Activated B cell treated with CpG ODN at 0.5 μM for 24 hours (primary cell): ENCODE measurements at regions of chr3 and their contacts with region 1.

Region 1: DNA sequence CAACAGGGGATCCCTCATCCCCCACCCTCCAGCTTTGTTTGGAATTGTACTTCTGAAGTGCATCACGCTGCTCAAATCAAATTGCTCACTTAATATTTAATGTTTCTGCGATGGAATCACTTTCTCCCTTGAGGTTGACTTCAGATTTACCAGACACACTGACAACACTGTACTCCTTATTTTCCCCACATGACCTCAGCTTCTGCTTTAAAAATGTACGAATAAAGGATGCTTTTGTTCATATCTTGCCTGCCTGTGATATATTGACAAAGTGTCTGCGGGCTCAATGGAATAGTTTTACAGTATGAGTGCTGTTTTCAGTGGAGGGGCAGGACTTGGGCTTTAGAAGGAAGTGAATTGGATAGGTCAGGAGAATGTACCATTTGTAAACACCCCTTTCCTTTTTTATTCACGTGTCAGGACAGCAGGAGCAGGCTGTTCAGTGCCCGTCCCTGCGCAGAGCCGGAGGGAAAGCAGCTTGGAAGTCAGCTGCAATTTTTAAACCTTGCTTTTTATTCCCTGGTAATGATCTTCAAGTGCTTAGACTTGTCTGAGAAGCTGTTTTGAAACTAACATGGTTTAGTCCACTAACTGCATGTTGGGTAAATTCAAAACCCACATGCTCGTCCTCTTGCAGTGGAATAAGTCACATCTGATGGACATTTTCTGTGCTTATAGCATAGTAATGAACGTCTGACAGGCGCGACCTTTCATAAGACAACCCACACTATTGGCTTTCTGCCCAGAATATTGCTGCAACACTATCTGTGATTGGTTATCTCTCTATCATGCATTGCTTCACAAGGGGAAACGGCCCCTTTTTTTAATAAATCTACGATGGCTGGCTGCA is 29.9 kb downstream of the MBNL1 start:
- DNase-seq: no peak
- ATAC-seq: peak; percentile 77
- H3K4me3 Mint-ChIP-seq: peak overlapping the region; percentile 58
- H3K27ac Mint-ChIP-seq: peak overlapping the region; percentile 61
- H3K4me1 Mint-ChIP-seq: peaks cover 84% of the 10 kb centered on the region
- H3K27me3 Mint-ChIP-seq: no peaks in the 10 kb centered on the region
- CTCF ChIP-seq: no peak

Region 2: DNA sequence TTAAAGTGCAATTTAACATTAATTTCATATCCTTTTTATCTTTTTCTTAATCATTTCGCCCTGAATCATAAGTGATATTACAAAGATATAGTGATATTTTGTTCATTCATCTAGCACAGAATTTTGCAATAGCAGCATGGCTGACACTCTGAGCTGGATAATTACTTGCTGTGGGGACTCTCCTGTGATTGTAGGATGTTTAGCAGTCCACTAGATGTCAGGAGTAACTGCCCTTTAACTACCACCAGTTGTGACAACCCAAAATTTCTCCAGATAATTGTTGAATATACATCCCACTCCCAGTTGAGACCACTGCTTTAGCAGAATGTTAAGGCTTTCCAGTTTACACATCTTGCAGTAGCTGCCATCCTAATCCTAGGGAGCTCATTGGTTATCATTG is 226.7 kb before region 1 on chr3:
- CTCF ChIA-PET with region 1: no interaction called
- POLR2A ChIA-PET with region 1: no interaction called
- intact Hi-C with region 1: loop called (anchors 10 kb)
- DNase-seq: no peak
- ATAC-seq: peak; percentile 66
- H3K4me3 Mint-ChIP-seq: no peak overlapping the region
- H3K27ac Mint-ChIP-seq: no peak overlapping the region
- H3K4me1 Mint-ChIP-seq: no peaks in the 10 kb centered on the region
- H3K27me3 Mint-ChIP-seq: no peaks in the 10 kb centered on the region
- CTCF ChIP-seq: no peak

Region 3: DNA sequence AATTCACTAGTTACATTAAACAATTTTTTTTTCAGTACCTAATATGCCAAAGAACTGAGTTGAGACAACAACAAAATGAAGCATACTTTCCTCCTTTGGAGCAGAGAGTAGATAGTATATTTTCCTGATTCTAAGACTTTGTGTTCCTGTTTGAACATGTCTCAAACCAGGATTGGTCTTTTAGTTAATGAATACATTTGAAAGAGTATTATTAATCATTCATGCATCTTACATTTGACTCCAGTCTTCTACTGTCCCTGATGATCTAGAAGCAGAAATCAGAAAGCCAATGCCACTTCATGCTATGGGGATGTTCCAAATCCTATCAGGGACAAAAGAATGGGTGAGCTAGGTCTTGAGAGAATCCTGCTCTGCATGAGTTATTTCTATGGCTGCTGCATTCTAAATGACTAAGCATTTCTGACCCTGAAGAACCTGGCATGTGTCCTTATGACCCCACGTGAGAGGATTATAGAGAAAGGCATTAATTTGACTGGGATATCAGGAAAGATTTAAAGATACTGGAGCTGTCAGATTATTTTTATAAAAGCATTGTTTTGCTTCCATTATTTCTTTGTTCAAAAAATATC is 62.8 kb before region 1 on chr3:
- CTCF ChIA-PET with region 1: no interaction called
- POLR2A ChIA-PET with region 1: interaction called, 12 read pairs
- intact Hi-C with region 1: no loop called
- DNase-seq: no peak
- ATAC-seq: no peak
- H3K4me3 Mint-ChIP-seq: no peak overlapping the region
- H3K27ac Mint-ChIP-seq: no peak overlapping the region
- H3K4me1 Mint-ChIP-seq: peaks cover 68% of the 10 kb centered on the region
- H3K27me3 Mint-ChIP-seq: no peaks in the 10 kb centered on the region
- CTCF ChIP-seq: no peak

Region 4: DNA sequence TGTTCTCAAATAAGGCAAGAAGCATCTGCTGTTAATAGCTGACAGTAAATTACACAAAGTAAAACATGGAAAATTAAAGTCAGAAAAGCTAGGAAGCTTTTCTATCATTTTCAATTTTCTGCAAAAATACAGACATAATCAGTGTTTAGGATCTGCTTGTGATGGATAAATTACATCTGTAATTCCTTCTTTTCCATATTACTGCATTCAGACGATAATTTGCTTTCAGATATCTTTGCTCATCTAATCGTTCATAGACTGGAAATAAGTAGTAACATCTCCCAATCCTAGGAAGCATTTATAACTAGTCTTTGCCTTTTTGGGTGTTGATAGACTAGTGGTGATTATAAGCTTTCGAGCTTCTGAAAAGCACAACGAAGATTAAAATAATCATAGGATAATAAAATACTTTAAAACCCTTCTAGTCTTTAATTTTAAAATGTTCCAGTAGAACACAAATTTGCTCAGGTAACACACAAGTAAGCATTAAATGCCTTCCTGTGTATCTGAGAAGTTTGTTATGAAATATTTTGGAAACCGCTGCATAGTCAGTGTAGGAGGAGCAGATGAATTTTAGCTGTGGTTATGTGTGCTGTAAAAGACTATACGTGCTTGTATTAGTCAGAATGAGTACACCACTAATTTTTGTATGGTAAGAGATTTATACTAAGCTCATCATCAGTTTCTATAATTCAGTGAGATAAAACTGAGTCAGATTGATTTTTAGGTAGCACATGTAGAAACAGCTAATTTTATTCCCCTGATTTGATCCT is 11.1 kb after region 1 on chr3:
- CTCF ChIA-PET with region 1: no interaction called
- POLR2A ChIA-PET with region 1: interaction called, 4 read pairs
- intact Hi-C with region 1: loop called (anchors 1 kb)
- DNase-seq: no peak
- ATAC-seq: peak; percentile 30
- H3K4me3 Mint-ChIP-seq: no peak overlapping the region
- H3K27ac Mint-ChIP-seq: no peak overlapping the region
- H3K4me1 Mint-ChIP-seq: peaks cover 61% of the 10 kb centered on the region
- H3K27me3 Mint-ChIP-seq: no peaks in the 10 kb centered on the region
- CTCF ChIP-seq: no peak

Region 5: DNA sequence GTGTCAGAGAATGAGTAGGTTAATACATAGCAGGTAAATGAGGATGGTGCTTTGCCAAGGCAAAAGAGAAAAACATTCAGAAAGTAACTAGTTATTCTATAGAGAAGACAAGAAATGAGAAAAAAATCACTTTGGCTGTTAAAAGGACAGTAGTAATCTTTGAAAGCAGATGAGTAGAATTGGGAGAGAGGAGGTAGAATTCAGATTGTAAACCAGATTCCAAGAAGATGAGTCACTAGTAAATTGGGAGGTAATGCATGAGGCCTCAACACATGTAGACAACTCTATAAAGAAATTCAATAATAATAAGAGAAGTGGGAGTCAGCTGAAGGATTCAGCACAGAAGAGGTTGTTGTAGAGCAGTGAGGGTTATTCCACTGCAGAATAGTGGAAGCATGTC is 51.5 kb after region 1 on chr3:
- CTCF ChIA-PET with region 1: no interaction called
- POLR2A ChIA-PET with region 1: no interaction called
- intact Hi-C with region 1: loop called (anchors 2 kb)
- DNase-seq: no peak
- ATAC-seq: no peak
- H3K4me3 Mint-ChIP-seq: no peak overlapping the region
- H3K27ac Mint-ChIP-seq: no peak overlapping the region
- H3K4me1 Mint-ChIP-seq: peaks cover 29% of the 10 kb centered on the region
- H3K27me3 Mint-ChIP-seq: no peaks in the 10 kb centered on the region
- CTCF ChIP-seq: no peak

Region 6: GRCh38 chr3:153161138-153161713 is 862.6 kb after region 1 on chr3:
- CTCF ChIA-PET with region 1: no interaction called
- POLR2A ChIA-PET with region 1: no interaction called
- intact Hi-C with region 1: no loop called
- DNase-seq: peak; percentile 68
- ATAC-seq: peak; percentile 77
- H3K4me3 Mint-ChIP-seq: peak overlapping the region; percentile 97
- H3K27ac Mint-ChIP-seq: peak overlapping the region; percentile 97
- H3K4me1 Mint-ChIP-seq: peaks cover 43% of the 10 kb centered on the region
- H3K27me3 Mint-ChIP-seq: no peaks in the 10 kb centered on the region
- CTCF ChIP-seq: no peak